ENCODE measurements at regions of chr5 and their contacts with region 1.

Region 1: DNA sequence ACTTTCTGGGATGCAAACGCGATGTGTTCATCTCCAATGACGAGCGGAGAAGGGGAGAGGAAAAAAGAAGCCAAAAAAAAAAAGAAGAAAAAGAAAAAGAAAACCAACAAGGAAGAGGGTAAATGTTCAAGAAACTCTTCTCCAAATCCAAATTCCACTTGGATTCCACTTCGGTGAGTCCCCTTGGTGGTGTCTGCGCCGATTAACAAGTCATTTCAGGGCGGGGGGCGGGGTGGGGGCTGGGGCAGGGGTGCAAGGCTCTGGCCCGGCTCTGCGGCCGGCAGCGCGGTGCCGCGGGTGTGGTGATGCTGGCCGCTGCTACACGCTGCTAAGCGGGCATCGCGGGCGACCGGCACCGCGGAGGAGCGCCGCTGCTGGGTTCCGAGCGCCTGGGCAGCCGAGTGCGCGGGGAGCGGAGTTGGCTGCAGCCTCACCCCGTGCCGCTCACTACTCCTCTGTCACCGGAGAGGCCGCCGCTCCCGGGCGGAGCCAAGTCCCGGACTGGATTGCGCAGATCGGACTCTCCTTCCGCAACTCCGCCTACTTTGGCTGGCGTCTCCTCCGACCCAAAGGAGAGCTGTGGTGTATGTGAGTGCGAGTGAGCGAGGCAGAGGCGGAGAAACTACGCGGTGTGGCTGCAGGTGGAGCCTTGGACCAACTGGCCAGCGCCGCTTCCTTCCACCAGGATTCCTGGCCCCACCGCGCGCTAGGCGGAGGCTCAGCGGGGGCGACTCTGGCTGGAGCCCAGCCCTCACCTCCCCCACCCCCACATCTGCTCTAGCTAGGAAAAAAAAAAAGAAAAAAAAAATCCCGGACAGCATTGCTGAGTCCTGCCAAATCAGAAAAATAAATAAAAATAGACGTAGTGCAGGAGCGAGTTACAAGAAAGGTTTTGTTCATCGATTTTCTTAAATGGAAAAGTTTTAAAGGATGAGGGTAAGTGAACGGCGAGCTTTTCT is at the start of gene SEMA6A:
- DNase-seq: peak; percentile 96
- H3K4me3 ChIP-seq: peak within 1 kb of the TSS; percentile 66 to 90 (median 74)
- H3K27ac ChIP-seq: peak within 1 kb of the TSS; percentile 81 to 91 (median 88)
- H3K4me1 ChIP-seq: peaks cover 0 to 28% (median 10%) of the 10 kb centered on the region in 4 donors
- H3K27me3 ChIP-seq: peaks cover 14% of the 10 kb centered on the region
- CTCF ChIP-seq: peak in 3 of 5 experiments; percentile 6 to 48 (median 45)
- EP300 ChIP-seq: no peak
- POLR2A ChIP-seq: peak; percentile 85
- total RNA-seq, gene SEMA6A: 76.7 to 231 (median 117) TPM

Region 2: GRCh38 chr5:116137544-116138378 is 436.9 kb before region 1 on chr5:
- in situ Hi-C with region 1: loop called in 2 of 4 experiments (anchors 25 kb)
- intact Hi-C with region 1: no loop called
- DNase-seq: no peak
- H3K4me3 ChIP-seq: no peak overlapping the region
- H3K27ac ChIP-seq: no peak overlapping the region
- H3K4me1 ChIP-seq: peaks cover 0 to 12% (median 0%) of the 10 kb centered on the region in 4 donors
- H3K27me3 ChIP-seq: no peaks in the 10 kb centered on the region
- CTCF ChIP-seq: peak; percentile 63 to 77 (median 76)
- EP300 ChIP-seq: no peak
- POLR2A ChIP-seq: no peak

Region 3: DNA sequence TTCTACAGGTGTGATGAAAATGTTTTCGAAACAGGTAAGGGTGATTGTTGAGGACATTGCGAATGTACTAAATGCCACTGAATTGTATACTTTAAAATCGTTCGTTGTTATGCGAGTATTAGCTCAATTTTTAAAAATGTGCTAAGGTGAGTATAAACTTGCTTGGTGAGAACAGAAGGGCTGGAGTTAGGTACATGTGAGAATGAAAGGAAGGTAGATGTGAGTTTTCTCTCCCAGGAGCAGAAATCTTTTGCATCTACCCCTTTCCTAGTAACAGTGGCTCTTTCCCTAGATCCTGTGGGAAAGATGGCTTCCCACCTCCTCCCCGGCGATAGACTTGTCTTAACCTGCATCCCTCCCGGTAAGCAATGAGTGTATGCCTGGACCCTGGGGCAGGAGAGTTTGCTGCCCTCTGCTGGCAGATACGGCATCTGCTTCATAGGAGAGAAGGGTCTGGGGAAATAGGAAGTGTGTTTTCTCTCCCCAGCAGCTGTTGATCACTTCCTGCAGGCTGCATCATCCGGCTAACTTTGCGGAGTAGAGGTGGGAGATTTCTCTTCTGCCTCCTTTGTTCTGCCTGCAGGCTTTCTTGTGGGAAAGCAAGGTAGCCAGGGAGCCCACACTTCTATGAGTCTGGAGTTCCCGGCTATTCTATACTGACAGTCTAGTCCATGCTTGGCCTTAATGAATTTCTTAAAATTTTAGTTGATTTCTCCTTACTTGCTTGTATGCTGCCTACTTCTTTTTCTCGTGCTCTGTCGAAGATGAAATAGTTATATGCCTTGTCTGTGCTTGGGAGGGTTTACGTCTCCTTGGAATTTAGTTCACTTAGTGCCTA is 373.3 kb after region 1 on chr5:
- in situ Hi-C with region 1: loop called in 2 of 4 experiments (anchors 25 kb)
- intact Hi-C with region 1: no loop called
- DNase-seq: peak; percentile 77
- H3K4me3 ChIP-seq: no peak overlapping the region
- H3K27ac ChIP-seq: no peak overlapping the region
- H3K4me1 ChIP-seq: no peaks in the 10 kb centered on the region
- H3K27me3 ChIP-seq: no peaks in the 10 kb centered on the region
- CTCF ChIP-seq: peak; percentile 63 to 69 (median 68)
- EP300 ChIP-seq: no peak
- POLR2A ChIP-seq: no peak

Region 4: DNA sequence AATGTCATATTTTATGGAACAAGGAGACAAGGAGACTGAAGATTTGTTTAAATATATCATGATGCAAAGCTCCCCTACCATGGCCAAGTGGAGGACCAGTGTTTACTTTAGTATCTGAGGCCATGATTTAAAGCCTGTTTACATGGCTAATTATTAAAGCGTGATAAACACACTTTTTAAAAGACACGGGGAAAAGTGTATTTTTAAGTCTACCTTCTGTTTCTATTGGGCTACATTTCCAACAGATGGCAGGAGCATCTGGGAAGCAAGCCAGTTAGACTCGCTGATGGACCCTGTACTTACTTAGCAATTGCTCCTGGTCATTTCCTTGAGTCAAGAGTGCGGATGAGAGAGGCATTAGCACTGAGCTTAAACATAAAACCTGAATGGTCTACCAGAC is 480.3 kb after region 1 on chr5:
- in situ Hi-C with region 1: loop called in 1 of 4 experiments (anchors 25 kb)
- intact Hi-C with region 1: no loop called
- DNase-seq: no peak
- H3K4me3 ChIP-seq: no peak overlapping the region
- H3K27ac ChIP-seq: no peak overlapping the region
- H3K4me1 ChIP-seq: peaks cover 0 to 3% (median 0%) of the 10 kb centered on the region in 4 donors
- H3K27me3 ChIP-seq: no peaks in the 10 kb centered on the region
- CTCF ChIP-seq: no peak
- EP300 ChIP-seq: no peak
- POLR2A ChIP-seq: no peak

Region 5: DNA sequence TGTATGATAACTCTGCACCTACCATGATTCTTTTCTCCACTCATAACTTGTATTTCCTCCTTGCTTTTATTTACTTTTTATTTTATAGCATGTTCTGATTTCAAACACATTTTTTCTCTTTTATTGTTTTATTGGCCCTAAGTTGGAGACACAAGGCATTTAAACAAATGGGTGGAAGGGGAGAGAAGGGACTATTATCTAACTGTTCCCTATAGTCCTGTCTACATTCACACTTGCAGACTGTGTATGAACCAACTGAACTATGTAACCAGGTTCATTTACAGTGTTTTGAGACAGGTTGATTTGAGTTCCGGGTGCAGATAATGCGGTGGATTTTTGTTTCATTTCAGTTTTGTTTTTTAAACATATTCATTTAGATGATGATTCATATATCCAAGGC is 830.6 kb after region 1 on chr5:
- in situ Hi-C with region 1: no loop called
- intact Hi-C with region 1: loop called (anchors 10 kb)
- DNase-seq: no peak
- H3K4me3 ChIP-seq: no peak overlapping the region
- H3K27ac ChIP-seq: peak overlapping the region in 2 of 4 donors; percentile 35 to 47
- H3K4me1 ChIP-seq: peaks cover 5 to 27% (median 10%) of the 10 kb centered on the region in 4 donors
- H3K27me3 ChIP-seq: no peaks in the 10 kb centered on the region
- CTCF ChIP-seq: no peak
- EP300 ChIP-seq: no peak
- POLR2A ChIP-seq: no peak